Naive thymus-derived CD4-positive, alpha-beta T cell (primary cell): ENCODE measurements at regions of chr12 and their contacts with region 1.

Region 1: GRCh38 chr12:68675101-68675842 is 11.5 kb upstream of the NUP107 start:
- DNase-seq: peak; percentile 30 to 87 (median 78)
- ATAC-seq: peak; percentile 98
- H3K4me3 ChIP-seq: peak overlapping the region; percentile 17
- H3K4me3 Mint-ChIP-seq: peak overlapping the region; percentile 55 to 90 (median 80)
- H3K27ac ChIP-seq: peak overlapping the region; percentile 46
- H3K27ac Mint-ChIP-seq: peak overlapping the region; percentile 83 to 95 (median 89)
- H3K4me1 ChIP-seq: peaks cover 30 to 32% of the 10 kb centered on the region in 2 donors
- H3K4me1 Mint-ChIP-seq: peaks cover 27 to 73% (median 63%) of the 10 kb centered on the region in 7 donors
- H3K27me3 ChIP-seq: no peaks in the 10 kb centered on the region
- H3K27me3 Mint-ChIP-seq: no peaks in the 10 kb centered on the region

Region 2: GRCh38 chr12:68587448-68587873 is 87.8 kb before region 1 on chr12:
- CTCF ChIA-PET with region 1: no interaction called
- POLR2A ChIA-PET with region 1: no interaction called
- intact Hi-C with region 1: loop called in 1 of 2 experiments (anchors 1 kb)
- DNase-seq: peak in 8 of 9 donors; percentile 39 to 66 (median 53)
- ATAC-seq: peak; percentile 72
- H3K4me3 ChIP-seq: no peak overlapping the region
- H3K4me3 Mint-ChIP-seq: peak overlapping the region; percentile 10 to 70 (median 64)
- H3K27ac ChIP-seq: no peak overlapping the region
- H3K27ac Mint-ChIP-seq: peak overlapping the region; percentile 78 to 96 (median 88)
- H3K4me1 ChIP-seq: peaks cover 26 to 37% of the 10 kb centered on the region in 2 donors
- H3K4me1 Mint-ChIP-seq: peaks cover 33 to 82% (median 60%) of the 10 kb centered on the region in 7 donors
- H3K27me3 ChIP-seq: no peaks in the 10 kb centered on the region
- H3K27me3 Mint-ChIP-seq: no peaks in the 10 kb centered on the region

Region 3: GRCh38 chr12:68665016-68665569 is 10.2 kb before region 1 on chr12:
- CTCF ChIA-PET with region 1: no interaction called
- POLR2A ChIA-PET with region 1: interaction called, 3 read pairs
- intact Hi-C with region 1: loop called in 1 of 2 experiments (anchors 1 kb)
- DNase-seq: no peak
- ATAC-seq: peak; percentile 22
- H3K4me3 ChIP-seq: no peak overlapping the region
- H3K4me3 Mint-ChIP-seq: no peak overlapping the region
- H3K27ac ChIP-seq: no peak overlapping the region
- H3K27ac Mint-ChIP-seq: peak overlapping the region in 8 of 9 donors; percentile 25 to 91 (median 76)
- H3K4me1 ChIP-seq: peaks cover 4 to 6% of the 10 kb centered on the region in 2 donors
- H3K4me1 Mint-ChIP-seq: peaks cover 5 to 47% (median 34%) of the 10 kb centered on the region in 7 donors
- H3K27me3 ChIP-seq: no peaks in the 10 kb centered on the region
- H3K27me3 Mint-ChIP-seq: no peaks in the 10 kb centered on the region